ENCODE measurements at regions of chr9 and their contacts with region 1.

Region 1: DNA sequence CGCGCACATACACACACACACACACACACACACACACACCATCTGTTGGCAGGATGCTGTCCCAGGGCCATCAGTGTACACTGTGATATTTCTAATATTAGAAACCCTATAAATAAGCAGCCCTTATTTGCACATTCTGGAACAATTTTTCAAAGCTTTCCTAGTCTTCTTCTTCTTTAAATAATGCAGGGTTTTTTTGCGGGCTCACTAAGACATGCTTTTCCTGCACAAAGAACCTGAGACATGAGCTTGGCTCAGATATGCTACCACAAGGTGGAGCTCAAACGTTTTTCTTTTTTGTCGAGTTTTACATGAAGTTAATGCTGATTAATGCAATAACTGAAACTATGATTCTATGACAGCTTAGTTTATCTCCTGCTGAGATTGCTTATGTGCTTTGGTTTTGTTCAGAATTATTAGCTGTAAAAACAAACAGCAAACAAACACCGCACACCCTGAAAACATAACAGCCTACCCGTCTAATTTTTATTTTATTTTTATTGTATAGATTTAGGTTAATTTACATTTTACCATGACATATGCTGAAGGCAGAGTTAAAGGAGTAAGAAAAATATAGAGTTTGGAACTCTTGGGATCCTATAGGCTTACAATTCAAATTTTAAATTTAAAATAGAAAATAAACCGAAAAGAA is 95.8 kb downstream of the ALDH1A1 start:
- DNase-seq: no peak
- ATAC-seq: peak; percentile 50; the same call in 1 of the 2 replicates
- H3K4me3 Mint-ChIP-seq: no peak overlapping the region
- H3K27ac Mint-ChIP-seq: no peak overlapping the region
- H3K4me1 Mint-ChIP-seq: peaks cover 16% of the 10 kb centered on the region
- H3K27me3 Mint-ChIP-seq: no peaks in the 10 kb centered on the region
- CTCF ChIP-seq: peak; percentile 23; the same call in 1 of the 2 replicates

Region 2: GRCh38 chr9:72814083-72814597 is 43.0 kb before region 1 on chr9:
- CTCF ChIA-PET with region 1: no interaction called
- POLR2A ChIA-PET with region 1: no interaction called
- DNase-seq: no peak
- ATAC-seq: no peak
- H3K4me3 Mint-ChIP-seq: no peak overlapping the region
- H3K27ac Mint-ChIP-seq: no peak overlapping the region
- H3K4me1 Mint-ChIP-seq: no peaks in the 10 kb centered on the region
- H3K27me3 Mint-ChIP-seq: no peaks in the 10 kb centered on the region
- CTCF ChIP-seq: no peak

Region 3: DNA sequence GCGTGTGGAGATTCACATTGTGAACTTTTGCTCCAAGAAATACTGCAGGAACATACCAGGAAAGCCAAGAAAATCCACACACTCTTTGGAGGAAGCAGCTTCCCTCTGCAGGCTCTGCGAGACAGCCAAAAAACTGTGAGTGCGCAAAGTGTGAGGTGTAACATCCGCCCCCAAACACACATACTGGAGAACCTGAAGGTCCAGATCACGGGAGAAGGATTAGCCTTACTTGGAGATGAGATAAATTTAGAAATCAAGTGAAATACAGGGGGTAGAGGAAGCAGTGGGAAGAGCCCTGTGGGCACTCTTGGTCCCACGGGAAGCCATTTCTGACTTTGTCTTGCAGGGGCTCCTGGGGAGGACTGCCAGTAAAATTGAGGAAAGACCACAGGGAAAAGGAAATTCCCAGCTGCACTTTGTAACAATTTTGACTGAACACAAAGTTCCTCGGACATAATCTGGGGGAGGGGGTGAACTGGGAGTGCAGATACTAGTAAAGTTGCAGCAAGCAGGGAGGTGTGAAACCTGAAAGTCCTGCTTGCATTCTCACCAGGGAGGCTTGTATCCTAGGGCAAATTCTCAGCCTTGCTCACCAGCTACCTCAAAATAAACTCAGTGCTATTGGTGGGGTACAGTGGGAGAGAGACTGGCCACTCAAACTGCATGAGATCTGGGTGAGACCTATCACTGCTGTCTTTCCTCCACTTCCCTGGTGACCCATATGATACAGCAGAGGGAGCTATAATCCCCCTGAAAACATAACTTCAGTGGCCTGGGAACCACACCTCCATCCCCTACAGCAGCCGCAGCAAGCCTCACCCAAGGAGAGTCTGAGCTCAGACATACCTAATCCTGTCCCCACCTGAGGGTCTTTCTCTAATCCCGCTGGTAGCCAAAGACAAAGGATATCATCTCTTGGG is 13.3 kb before region 1 on chr9:
- CTCF ChIA-PET with region 1: interaction called, 44 read pairs
- POLR2A ChIA-PET with region 1: no interaction called
- DNase-seq: peak; percentile 34
- ATAC-seq: peak; percentile 100
- H3K4me3 Mint-ChIP-seq: no peak overlapping the region
- H3K27ac Mint-ChIP-seq: no peak overlapping the region
- H3K4me1 Mint-ChIP-seq: peaks cover 15% of the 10 kb centered on the region
- H3K27me3 Mint-ChIP-seq: no peaks in the 10 kb centered on the region; the same call in 1 of the 2 replicates
- CTCF ChIP-seq: no peak

Region 4: DNA sequence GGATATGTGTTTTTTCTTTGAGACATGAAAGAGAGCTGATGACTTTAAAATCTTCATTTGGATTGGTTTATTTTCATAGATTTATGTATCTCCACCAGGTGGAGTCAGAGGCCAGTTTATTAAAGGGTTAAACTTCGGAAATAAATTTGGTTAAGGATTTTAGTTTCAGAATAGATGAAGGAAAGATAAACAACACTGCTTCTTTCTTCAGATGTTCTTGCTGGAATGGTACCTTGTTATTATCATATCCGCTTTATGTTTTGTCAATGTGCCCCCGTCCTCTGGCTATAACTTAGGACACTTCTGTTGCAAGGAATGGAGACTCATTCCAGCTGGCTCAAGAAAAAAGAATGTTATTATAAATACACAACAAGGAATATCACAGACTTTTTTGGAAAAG is 14.6 kb after region 1 on chr9:
- CTCF ChIA-PET with region 1: interaction called, 15 read pairs
- POLR2A ChIA-PET with region 1: no interaction called
- DNase-seq: no peak
- ATAC-seq: no peak
- H3K4me3 Mint-ChIP-seq: no peak overlapping the region
- H3K27ac Mint-ChIP-seq: no peak overlapping the region
- H3K4me1 Mint-ChIP-seq: peaks cover 7% of the 10 kb centered on the region
- H3K27me3 Mint-ChIP-seq: no peaks in the 10 kb centered on the region
- CTCF ChIP-seq: 0 out of 2 replicates have a peak, but pooled peaks have one; percentile 16

Region 5: DNA sequence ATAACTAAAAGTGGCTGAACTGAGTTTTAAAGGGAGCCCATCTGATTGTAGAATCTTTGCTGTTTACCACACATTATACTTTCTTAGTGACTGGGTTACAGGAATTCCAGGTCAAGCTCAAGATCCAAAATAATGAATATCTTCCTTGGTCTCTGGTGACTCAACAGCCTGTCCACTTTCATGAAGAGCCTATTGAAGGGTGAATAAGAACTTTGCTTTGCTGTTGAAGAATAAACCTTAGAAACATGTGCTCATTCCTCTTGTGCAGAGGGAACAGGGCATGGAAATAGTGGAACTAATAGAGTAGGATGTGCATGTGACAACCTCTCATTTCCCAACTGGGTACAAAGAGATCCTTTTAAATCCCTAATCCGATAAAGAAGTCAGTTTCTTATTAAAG is 74.3 kb after region 1 on chr9:
- CTCF ChIA-PET with region 1: interaction called, 15 read pairs
- POLR2A ChIA-PET with region 1: no interaction called
- DNase-seq: no peak
- ATAC-seq: no peak
- H3K4me3 Mint-ChIP-seq: no peak overlapping the region
- H3K27ac Mint-ChIP-seq: no peak overlapping the region
- H3K4me1 Mint-ChIP-seq: peaks cover 4% of the 10 kb centered on the region; the same call in 1 of the 2 replicates
- H3K27me3 Mint-ChIP-seq: no peaks in the 10 kb centered on the region
- CTCF ChIP-seq: no peak

Region 6: GRCh38 chr9:73023025-73023541 is 166.0 kb after region 1 on chr9:
- CTCF ChIA-PET with region 1: interaction called, 35 read pairs
- POLR2A ChIA-PET with region 1: no interaction called
- DNase-seq: peak; percentile 58
- ATAC-seq: no peak; the same call in 1 of the 2 replicates
- H3K4me3 Mint-ChIP-seq: no peak overlapping the region
- H3K27ac Mint-ChIP-seq: no peak overlapping the region
- H3K4me1 Mint-ChIP-seq: no peaks in the 10 kb centered on the region
- H3K27me3 Mint-ChIP-seq: no peaks in the 10 kb centered on the region
- CTCF ChIP-seq: peak; percentile 63

Region 7: GRCh38 chr9:73079326-73079725 is 222.2 kb after region 1 on chr9:
- CTCF ChIA-PET with region 1: interaction called, 12 read pairs
- POLR2A ChIA-PET with region 1: no interaction called
- DNase-seq: no peak
- ATAC-seq: peak; percentile 43; the same call in 1 of the 2 replicates
- H3K4me3 Mint-ChIP-seq: no peak overlapping the region
- H3K27ac Mint-ChIP-seq: no peak overlapping the region; the same call in 1 of the 2 replicates
- H3K4me1 Mint-ChIP-seq: peaks cover 33% of the 10 kb centered on the region
- H3K27me3 Mint-ChIP-seq: no peaks in the 10 kb centered on the region
- CTCF ChIP-seq: no peak